ENCODE measurements at regions of chr2 and their contacts with region 1.

Region 1: GRCh38 chr2:48328159-48328809 is 201.7 kb upstream of the STON1 start:
- DNase-seq: no peak
- ATAC-seq: no peak
- H3K4me3 ChIP-seq: no peak overlapping the region
- H3K27ac ChIP-seq: no peak overlapping the region
- H3K4me1 ChIP-seq: peaks cover 0 to 1% of the 10 kb centered on the region in 2 donors
- H3K27me3 ChIP-seq: no peaks in the 10 kb centered on the region

Region 2: DNA sequence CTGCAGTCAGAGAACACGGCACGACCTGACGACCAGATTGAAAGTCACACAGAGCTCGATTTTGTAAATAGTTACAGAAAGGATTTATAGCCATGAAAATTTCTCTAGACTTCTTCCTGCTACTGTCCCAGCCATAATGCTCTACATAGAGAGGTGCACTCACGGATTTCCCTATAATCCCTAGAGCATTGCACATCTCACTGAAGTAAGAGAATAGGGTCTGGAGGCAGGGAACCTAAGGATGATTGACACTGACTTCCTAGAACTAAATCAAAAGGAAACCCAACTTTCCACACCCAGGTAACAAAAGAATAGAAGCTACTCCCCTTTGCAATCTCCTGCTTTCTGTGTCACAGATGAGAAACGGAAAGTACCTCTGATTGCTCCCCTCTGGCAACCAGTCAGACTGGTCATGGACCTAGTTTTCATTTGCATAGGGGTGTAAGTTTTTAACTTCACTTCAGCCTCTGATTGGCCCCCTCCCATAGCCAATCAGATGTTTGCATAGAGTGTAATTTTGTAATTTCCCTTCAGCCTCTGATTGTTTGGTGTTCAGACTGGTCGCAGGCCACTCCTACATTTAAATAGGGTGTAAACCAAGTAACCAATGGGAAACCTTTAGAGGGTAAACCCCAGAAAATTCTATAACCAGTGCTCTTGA is 363.4 kb before region 1 on chr2:
- intact Hi-C with region 1: no loop called
- DNase-seq: no peak
- ATAC-seq: no peak
- H3K4me3 ChIP-seq: no peak overlapping the region
- H3K27ac ChIP-seq: no peak overlapping the region
- H3K4me1 ChIP-seq: no peaks in the 10 kb centered on the region
- H3K27me3 ChIP-seq: no peaks in the 10 kb centered on the region

Region 3: DNA sequence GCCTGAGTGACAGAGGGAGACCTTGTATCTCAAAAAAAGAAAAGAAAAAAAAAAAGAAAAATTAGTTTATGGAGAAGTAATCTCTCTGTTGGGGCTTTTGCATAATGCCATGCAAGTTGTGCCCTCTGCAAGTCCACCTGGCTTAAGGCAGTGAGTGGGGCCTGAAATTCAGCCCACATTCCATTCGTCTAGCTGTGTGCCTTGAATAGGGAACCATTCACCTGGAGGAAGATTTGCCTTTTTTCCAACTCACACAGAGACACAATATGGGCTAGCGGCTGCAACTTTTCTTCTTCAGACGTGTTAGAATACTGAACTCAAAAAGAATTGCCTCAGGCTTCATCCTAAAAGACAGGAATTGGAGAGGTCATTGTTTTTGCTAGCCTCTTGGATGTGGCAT is 41.7 kb after region 1 on chr2:
- intact Hi-C with region 1: loop called in 1 of 2 experiments (anchors 10 kb)
- DNase-seq: no peak
- ATAC-seq: no peak
- H3K4me3 ChIP-seq: no peak overlapping the region
- H3K27ac ChIP-seq: no peak overlapping the region
- H3K4me1 ChIP-seq: peaks cover 0 to 2% of the 10 kb centered on the region in 2 donors
- H3K27me3 ChIP-seq: no peaks in the 10 kb centered on the region

Region 4: GRCh38 chr2:48883661-48884060 is 555.4 kb after region 1 on chr2:
- intact Hi-C with region 1: no loop called
- DNase-seq: no peak
- ATAC-seq: no peak
- H3K4me3 ChIP-seq: no peak overlapping the region
- H3K27ac ChIP-seq: no peak overlapping the region
- H3K4me1 ChIP-seq: no peaks in the 10 kb centered on the region
- H3K27me3 ChIP-seq: peaks cover 0 to 1% of the 10 kb centered on the region in 2 donors